H1 (cell line): ENCODE measurements at regions of chr7 and their contacts with region 1.

Region 1: GRCh38 chr7:35492451-35493175 is 202.3 kb downstream of the HERPUD2 start:
- DNase-seq: no peak
- H3K4me3 ChIP-seq: no peak overlapping the region
- H3K27ac ChIP-seq: no peak overlapping the region
- H3K4me1 ChIP-seq: no peaks in the 10 kb centered on the region; a peak in 1 of 7 replicates
- H3K27me3 ChIP-seq: no peaks in the 10 kb centered on the region
- CTCF ChIP-seq: no peak
- EP300 ChIP-seq: no peak
- POLR2A ChIP-seq: no peak
- RAD21 ChIP-seq: no peak

Region 2: DNA sequence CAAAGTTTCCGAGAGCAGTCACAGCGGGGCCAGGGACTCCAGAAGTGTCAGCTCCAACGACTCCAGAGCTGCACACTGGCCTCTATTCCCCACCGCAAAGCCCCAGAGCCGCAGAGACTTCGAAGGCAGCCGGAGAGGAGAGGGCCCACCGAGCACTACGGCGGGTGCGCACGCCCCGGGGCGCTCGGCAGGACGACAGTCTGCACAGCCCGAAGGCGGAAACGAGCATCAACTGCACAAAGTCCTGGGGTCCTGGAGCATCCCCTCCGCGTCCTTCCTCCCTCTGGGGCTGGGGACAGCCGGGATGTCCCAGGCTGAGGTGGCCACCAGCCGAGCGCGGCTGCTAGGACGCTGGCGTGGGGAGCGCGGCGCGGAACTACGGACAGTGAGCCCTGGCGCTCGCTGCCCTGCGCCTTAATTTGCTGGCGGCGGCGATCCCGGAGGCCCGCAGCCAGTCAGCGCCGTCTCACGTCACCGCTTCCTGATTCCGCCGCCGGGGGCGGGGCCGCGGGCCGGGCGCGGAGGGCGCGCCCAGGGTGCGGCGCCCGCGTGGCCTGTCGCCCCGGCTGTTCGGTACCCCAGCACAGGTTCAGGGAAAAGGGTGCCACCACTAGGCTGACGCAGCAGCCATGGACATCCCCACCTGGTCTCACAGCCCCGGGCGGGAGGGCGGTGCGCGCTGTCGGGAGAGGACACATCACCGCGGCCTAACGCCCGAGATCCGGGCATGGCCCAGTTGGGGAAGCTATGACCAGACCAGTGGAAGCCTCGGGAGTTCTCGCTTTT is 238.7 kb before region 1 on chr7 and contains the start of gene TBX20:
- CTCF ChIA-PET with region 1: no interaction called
- POLR2A ChIA-PET with region 1: no interaction called
- DNase-seq: peak in 1 of 2 experiments; percentile 79
- H3K4me3 ChIP-seq: peak within 1 kb of the TSS; percentile 37 to 64 (median 52)
- H3K27ac ChIP-seq: no peak within 1 kb of the TSS
- H3K4me1 ChIP-seq: peaks cover 5 to 31% (median 12%) of the 10 kb centered on the region in 4 experiments
- H3K27me3 ChIP-seq: peaks cover 76 to 100% (median 96%) of the 10 kb centered on the region in 4 experiments
- CTCF ChIP-seq: no peak; a peak in 1 of 4 replicates
- EP300 ChIP-seq: no peak
- POLR2A ChIP-seq: no peak
- RAD21 ChIP-seq: no peak
- total RNA-seq, gene TBX20: 0.26 and 0.29 TPM in 2 replicates

Region 3: GRCh38 chr7:35508623-35509400 is 16.2 kb after region 1 on chr7:
- CTCF ChIA-PET with region 1: interaction called, 12 read pairs
- POLR2A ChIA-PET with region 1: no interaction called
- DNase-seq: no peak
- H3K4me3 ChIP-seq: no peak overlapping the region
- H3K27ac ChIP-seq: no peak overlapping the region
- H3K4me1 ChIP-seq: peaks cover 4 to 13% (median 5%) of the 10 kb centered on the region in 4 experiments
- H3K27me3 ChIP-seq: no peaks in the 10 kb centered on the region
- CTCF ChIP-seq: peak in 1 of 3 experiments; percentile 32; a peak in 2 of 4 replicates
- EP300 ChIP-seq: no peak
- POLR2A ChIP-seq: no peak
- RAD21 ChIP-seq: no peak

Region 4: GRCh38 chr7:35571611-35572240 is 79.1 kb after region 1 on chr7:
- CTCF ChIA-PET with region 1: no interaction called
- POLR2A ChIA-PET with region 1: no interaction called
- DNase-seq: no peak
- H3K4me3 ChIP-seq: no peak overlapping the region
- H3K27ac ChIP-seq: no peak overlapping the region
- H3K4me1 ChIP-seq: no peaks in the 10 kb centered on the region
- H3K27me3 ChIP-seq: no peaks in the 10 kb centered on the region
- CTCF ChIP-seq: no peak
- EP300 ChIP-seq: no peak
- POLR2A ChIP-seq: no peak
- RAD21 ChIP-seq: no peak